ENCODE measurements at regions of chr17 and their contacts with region 1.

Region 1: GRCh38 chr17:35808962-35809854 is at the start of gene TAF15:
- DNase-seq: peak; percentile 98
- ATAC-seq: peak; percentile 92
- H3K4me3 Mint-ChIP-seq: peak within 1 kb of the TSS; percentile 93
- H3K27ac Mint-ChIP-seq: peak within 1 kb of the TSS; percentile 99
- H3K4me1 Mint-ChIP-seq: peaks cover 46% of the 10 kb centered on the region
- H3K27me3 Mint-ChIP-seq: no peaks in the 10 kb centered on the region
- total RNA-seq, gene TAF15: 291 to 299 TPM

Region 2: GRCh38 chr17:35578197-35578928 is 230.8 kb before region 1 on chr17 and contains the start of gene PEX12:
- POLR2A ChIA-PET with region 1: interaction called, 17 read pairs
- DNase-seq: peak; percentile 81
- ATAC-seq: peak; percentile 97
- H3K4me3 Mint-ChIP-seq: peak within 1 kb of the TSS; percentile 84
- H3K27ac Mint-ChIP-seq: peak within 1 kb of the TSS; percentile 93
- H3K4me1 Mint-ChIP-seq: peaks cover 29% of the 10 kb centered on the region
- H3K27me3 Mint-ChIP-seq: no peaks in the 10 kb centered on the region
- total RNA-seq, gene PEX12: 4.4 to 4.6 TPM

Region 3: DNA sequence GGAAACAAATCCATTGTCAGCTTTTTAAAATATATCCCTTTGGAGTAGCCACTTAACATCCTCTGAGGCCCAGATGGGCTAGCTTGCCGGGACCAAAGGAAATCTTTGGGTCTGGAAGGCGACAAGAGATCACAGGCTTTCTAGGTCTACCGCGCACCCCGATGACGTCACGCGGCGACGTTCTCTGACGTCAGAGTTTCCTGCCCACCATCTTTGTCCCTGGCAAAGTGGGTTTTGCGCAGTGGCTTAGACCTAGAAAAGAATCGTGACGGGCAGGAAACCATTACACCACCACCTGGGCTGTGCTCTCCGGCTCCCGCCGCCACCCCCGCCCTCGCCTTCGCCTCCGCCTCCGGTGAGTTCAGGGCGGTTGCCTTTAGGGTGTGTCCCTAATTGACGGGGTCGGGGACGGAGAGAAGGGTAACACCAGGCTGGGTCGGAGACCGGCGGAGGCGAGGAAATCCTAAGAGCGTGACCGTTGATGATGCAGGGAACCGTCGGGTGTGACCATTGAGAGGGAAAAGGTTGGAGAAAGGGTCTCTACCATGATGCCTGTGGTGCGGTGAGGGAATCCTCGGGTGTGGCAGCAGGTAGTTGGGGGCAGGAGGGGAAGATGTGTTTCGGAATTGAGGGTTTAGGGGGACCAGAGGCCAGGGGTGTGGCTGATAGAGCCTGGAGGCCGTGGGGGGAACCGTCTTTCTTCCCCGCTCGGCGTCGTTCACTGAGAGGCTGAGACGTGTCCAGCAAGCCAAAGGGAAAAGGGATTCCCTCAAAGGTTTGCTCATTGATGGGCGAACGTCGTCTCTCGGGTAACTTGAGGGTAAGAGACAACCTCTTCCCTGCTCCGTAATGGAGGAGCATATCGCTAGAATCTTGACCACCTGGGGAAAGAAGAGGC is 221.9 kb before region 1 on chr17 and contains the start of gene AP2B1:
- POLR2A ChIA-PET with region 1: interaction called, 12 read pairs
- DNase-seq: peak; percentile 98
- ATAC-seq: peak; percentile 99
- H3K4me3 Mint-ChIP-seq: peak within 1 kb of the TSS; percentile 94
- H3K27ac Mint-ChIP-seq: peak within 1 kb of the TSS; percentile 99
- H3K4me1 Mint-ChIP-seq: peaks cover 32% of the 10 kb centered on the region
- H3K27me3 Mint-ChIP-seq: no peaks in the 10 kb centered on the region
- total RNA-seq, gene AP2B1: 154 to 163 TPM

Region 4: DNA sequence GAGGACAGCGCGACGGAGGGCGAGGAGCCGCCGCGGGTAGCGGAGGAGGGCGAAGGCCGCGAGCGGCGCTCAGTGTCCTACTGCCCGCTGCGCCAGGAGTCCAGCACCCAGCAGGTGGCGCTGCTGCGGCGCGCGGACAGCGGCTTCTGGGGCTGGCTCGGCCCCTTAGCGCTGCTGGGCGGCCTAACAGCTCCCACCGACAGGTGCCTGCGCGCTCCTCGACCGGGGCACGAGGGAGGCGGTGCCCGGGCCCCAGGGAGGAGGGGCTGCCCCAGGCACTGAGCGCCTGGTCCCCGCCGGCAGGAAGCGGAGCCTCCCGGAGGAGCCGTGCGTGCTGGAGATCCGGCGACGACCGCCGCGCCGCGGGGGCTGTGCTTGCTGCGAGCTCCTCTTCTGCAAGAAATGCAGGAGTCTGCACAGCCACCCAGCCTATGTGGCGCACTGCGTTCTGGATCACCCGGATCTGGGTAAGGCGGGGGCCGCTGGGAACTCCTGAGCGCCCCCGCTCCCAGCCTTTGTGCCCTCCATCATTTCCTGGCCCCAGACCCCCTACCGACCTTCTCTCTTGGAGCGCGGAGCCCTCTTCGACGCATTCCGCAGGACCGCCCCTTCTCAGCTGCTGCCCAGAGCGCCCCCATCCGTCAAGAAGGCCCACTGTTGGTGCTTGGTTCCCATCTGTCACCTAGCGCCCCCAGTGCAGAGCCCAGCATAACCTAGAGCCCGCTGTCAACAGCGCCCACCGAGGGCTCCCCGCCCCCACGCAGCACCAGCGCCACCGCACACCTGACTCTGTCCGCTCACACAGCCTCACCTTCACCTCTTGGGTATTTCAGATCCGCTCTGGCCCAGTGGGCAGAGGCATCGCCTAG is 44.9 kb before region 1 on chr17:
- POLR2A ChIA-PET with region 1: interaction called, 70 read pairs
- DNase-seq: peak; percentile 96
- ATAC-seq: peak; percentile 90
- H3K4me3 Mint-ChIP-seq: peak overlapping the region; percentile 86
- H3K27ac Mint-ChIP-seq: peak overlapping the region; percentile 79
- H3K4me1 Mint-ChIP-seq: peaks cover 5% of the 10 kb centered on the region
- H3K27me3 Mint-ChIP-seq: peaks cover 2% of the 10 kb centered on the region

Region 5: GRCh38 chr17:35794988-35795824 is 14.0 kb before region 1 on chr17 and contains the start of gene MMP28:
- POLR2A ChIA-PET with region 1: interaction called, 21 read pairs
- DNase-seq: peak; percentile 66
- ATAC-seq: peak; percentile 82
- H3K4me3 Mint-ChIP-seq: peak within 1 kb of the TSS; percentile 76
- H3K27ac Mint-ChIP-seq: no peak within 1 kb of the TSS
- H3K4me1 Mint-ChIP-seq: peaks cover 12% of the 10 kb centered on the region
- H3K27me3 Mint-ChIP-seq: peaks cover 64% of the 10 kb centered on the region
- total RNA-seq, gene MMP28: 0.45 to 0.75 TPM

Region 6: GRCh38 chr17:35870906-35871819 is 62.0 kb after region 1 on chr17:
- POLR2A ChIA-PET with region 1: interaction called, 12 read pairs
- DNase-seq: peak; percentile 45
- ATAC-seq: peak; percentile 93
- H3K4me3 Mint-ChIP-seq: peak overlapping the region; percentile 29
- H3K27ac Mint-ChIP-seq: peak overlapping the region; percentile 32
- H3K4me1 Mint-ChIP-seq: peaks cover 38% of the 10 kb centered on the region
- H3K27me3 Mint-ChIP-seq: no peaks in the 10 kb centered on the region

Region 7: DNA sequence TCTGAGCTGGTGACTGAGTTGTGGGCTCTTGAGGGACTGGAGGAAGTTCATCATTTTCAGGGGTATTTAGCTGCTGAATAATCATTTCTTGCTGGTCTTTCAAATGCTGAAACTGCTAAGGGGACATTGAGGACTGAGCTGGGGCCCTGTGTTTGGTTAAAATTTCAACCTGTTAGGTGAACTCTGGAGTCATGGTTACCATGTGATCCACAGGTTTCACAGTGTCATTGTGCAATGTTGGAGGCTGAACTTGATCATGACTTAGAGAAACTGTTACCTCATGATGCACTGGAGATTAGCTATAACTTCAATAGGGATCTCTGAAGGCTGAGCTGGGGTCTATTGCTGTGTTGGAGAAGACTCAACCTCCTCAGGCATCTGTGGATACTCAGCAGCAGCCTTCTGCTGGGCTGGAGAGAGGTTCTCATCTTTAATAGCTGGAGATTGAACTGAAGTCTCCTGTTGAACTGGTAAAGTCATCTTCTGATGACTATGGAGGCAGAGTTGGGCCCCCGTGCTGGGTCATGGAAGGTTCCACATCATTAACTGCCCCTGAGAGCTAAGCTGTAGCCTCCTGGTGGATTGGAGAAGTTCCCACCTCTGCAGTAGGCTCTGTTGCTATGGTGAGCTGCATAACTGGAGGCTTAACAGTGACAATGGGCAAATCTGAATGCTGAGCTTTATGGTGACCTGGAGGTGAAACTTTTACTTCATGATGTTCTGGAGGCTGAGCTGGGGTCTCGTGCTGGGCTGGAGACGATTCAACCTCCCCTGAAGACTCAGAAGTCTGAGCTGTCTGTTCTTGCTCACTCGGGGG is 106.2 kb after region 1 on chr17:
- POLR2A ChIA-PET with region 1: no interaction called
- DNase-seq: no peak
- ATAC-seq: no peak
- H3K4me3 Mint-ChIP-seq: no peak overlapping the region
- H3K27ac Mint-ChIP-seq: no peak overlapping the region
- H3K4me1 Mint-ChIP-seq: peaks cover 43% of the 10 kb centered on the region
- H3K27me3 Mint-ChIP-seq: peaks cover 2% of the 10 kb centered on the region

Measured in activated naive CD8-positive, alpha-beta T cell treated with anti-CD3 and anti-CD28 coated beads, Interleukin-2, amount 10 ng/mL, durations not matched to agents 7 days and 5 days (primary cell).